Activated T-helper 1 cell treated with anti-CD3 and anti-CD28 coated beads, Interleukin-12 subunit alpha, Interleukin-12 subunit beta, Interleukin-2, Interleukin-4 antibody, amounts not matched to agents 30 ng/mL and 10 ng/mL and 1 ng/mL, durations not matched to agents 14 hours and 24 hours and 36 hours (primary cell): ENCODE measurements at regions of chr3 and their contacts with region 1.

Region 1: GRCh38 chr3:194134757-194135528 is 1.0 kb upstream of the HES1 start:
- DNase-seq: peak; percentile 80
- H3K4me3 Mint-ChIP-seq: peak overlapping the region; percentile 84
- H3K27ac Mint-ChIP-seq: peak overlapping the region; percentile 90
- H3K4me1 Mint-ChIP-seq: peaks cover 82% of the 10 kb centered on the region
- H3K27me3 Mint-ChIP-seq: peaks cover 67% of the 10 kb centered on the region

Region 2: DNA sequence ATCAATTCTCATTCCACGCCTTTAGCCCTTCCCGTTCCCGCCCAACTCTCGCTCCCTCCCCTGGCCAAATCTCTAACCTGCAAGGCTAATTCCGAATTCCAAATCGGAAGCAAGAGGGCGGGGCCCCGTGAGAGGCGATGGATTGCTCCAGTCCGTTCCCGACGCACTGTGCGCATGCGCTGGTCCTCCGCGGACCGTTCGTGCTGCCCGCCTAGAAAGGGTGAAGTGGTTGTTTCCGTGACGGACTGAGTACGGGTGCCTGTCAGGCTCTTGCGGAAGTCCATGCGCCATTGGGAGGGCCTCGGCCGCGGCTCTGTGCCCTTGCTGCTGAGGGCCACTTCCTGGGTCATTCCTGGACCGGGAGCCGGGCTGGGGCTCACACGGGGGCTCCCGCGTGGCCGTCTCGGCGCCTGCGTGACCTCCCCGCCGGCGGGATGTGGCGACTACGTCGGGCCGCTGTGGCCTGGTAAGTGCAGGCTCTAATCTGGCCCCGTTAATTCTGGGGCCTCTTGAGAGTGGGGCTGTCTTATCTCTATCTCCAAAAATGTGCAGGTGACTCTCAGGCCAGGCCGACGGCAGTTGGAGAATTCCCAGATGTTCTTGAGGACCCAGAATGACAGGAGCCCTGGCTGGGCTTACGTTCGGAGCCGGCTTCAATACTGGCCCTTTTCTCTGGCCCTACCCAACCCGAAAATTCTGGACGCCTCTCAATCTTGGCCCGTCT is 541.8 kb before region 1 on chr3 and contains the start of gene OPA1:
- intact Hi-C with region 1: loop called (anchors 5 kb)
- DNase-seq: peak; percentile 90
- H3K4me3 Mint-ChIP-seq: peak within 1 kb of the TSS; percentile 98
- H3K27ac Mint-ChIP-seq: peak within 1 kb of the TSS; percentile 99
- H3K4me1 Mint-ChIP-seq: peaks cover 49% of the 10 kb centered on the region
- H3K27me3 Mint-ChIP-seq: no peaks in the 10 kb centered on the region
- total RNA-seq, gene OPA1: 78.1 and 91.2 TPM in 2 replicates

Region 3: DNA sequence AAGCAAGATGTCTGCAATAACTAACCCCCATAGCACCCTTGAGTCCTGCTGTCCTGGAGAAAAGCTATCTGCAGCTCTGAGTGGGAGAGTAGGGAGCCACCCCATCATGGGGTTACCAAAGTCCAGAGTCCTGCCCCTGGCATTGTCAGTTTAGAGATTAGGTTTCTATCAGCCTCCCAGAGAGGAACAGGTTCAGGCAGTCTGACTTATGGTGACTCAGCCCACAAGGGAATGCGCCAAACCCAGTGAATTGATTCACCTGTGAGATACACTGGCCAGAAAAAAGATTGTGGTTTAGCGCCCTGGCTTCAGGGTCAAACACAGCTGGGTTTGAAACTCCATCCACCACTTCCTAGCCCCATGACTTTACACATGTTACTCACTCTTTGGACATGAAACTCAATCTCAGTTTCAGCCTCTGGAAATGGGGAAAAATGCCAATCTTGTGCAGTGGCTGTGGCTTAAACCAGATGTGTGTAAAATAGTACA is 262.6 kb before region 1 on chr3:
- intact Hi-C with region 1: loop called (anchors 5 kb)
- DNase-seq: no peak
- H3K4me3 Mint-ChIP-seq: no peak overlapping the region
- H3K27ac Mint-ChIP-seq: no peak overlapping the region
- H3K4me1 Mint-ChIP-seq: peaks cover 11% of the 10 kb centered on the region
- H3K27me3 Mint-ChIP-seq: peaks cover 39% of the 10 kb centered on the region

Region 4: DNA sequence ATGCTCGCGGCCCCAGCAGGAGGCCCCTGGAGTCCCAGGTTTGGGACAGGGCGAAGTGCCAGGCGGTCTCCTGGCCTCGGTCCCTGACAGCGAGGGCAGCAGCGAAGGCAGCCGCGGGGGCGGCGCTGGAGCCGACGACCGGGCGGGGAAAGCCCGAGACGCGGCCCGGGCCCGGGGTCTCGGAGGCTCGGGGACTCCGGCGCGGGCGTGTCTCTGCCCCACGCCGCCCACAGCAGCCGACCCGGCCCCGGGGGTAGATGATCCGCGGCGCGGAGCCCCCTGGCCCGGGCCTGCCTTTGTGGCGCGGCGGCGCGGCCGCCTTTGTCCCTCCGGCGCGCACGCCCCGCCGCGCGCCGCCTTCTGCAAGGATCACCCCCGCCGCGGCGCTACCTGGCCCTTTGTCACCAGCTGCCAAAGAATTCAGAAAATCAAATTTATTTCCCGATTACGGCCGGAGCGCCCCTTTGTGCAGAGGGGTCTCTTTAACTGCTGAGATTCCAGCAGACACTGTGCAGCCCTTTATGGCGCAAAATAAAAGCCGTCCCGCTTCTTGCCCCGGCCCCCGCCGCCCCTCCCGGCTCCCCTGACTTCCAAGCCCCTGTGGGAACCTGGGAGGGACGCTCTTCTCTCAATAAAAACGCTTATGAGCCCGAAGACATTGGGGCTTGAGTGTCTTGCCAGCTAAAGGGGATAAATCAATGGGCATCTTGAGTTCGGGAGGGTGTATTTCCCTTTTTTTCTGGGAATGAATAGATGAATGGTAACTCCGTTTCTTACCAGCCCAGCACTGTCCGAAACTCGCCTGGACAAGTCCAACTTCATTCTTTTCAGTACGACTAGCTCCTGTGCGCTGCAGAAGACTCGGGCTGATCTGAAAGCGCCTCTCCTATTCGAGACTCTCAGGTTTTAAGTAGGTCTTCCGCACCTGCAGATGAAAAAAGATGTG is 69.4 kb after region 1 on chr3:
- intact Hi-C with region 1: loop called (anchors 2 kb)
- DNase-seq: peak; percentile 5
- H3K4me3 Mint-ChIP-seq: peak overlapping the region; percentile 81
- H3K27ac Mint-ChIP-seq: peak overlapping the region; percentile 69
- H3K4me1 Mint-ChIP-seq: peaks cover 34% of the 10 kb centered on the region
- H3K27me3 Mint-ChIP-seq: peaks cover 8% of the 10 kb centered on the region

Region 5: GRCh38 chr3:194315088-194315964 is 180.4 kb after region 1 on chr3:
- intact Hi-C with region 1: loop called (anchors 1 kb)
- DNase-seq: peak; percentile 79
- H3K4me3 Mint-ChIP-seq: peak overlapping the region; percentile 83
- H3K27ac Mint-ChIP-seq: no peak overlapping the region
- H3K4me1 Mint-ChIP-seq: peaks cover 43% of the 10 kb centered on the region
- H3K27me3 Mint-ChIP-seq: peaks cover 7% of the 10 kb centered on the region

Region 6: GRCh38 chr3:194328053-194328657 is 193.2 kb after region 1 on chr3:
- intact Hi-C with region 1: no loop called
- DNase-seq: no peak
- H3K4me3 Mint-ChIP-seq: no peak overlapping the region
- H3K27ac Mint-ChIP-seq: no peak overlapping the region
- H3K4me1 Mint-ChIP-seq: peaks cover 5% of the 10 kb centered on the region
- H3K27me3 Mint-ChIP-seq: peaks cover 14% of the 10 kb centered on the region

Region 7: GRCh38 chr3:194583604-194584318 is 448.8 kb after region 1 on chr3:
- intact Hi-C with region 1: loop called (anchors 5 kb)
- DNase-seq: peak; percentile 95
- H3K4me3 Mint-ChIP-seq: peak overlapping the region; percentile 98
- H3K27ac Mint-ChIP-seq: peak overlapping the region; percentile 96
- H3K4me1 Mint-ChIP-seq: peaks cover 34% of the 10 kb centered on the region
- H3K27me3 Mint-ChIP-seq: peaks cover 7% of the 10 kb centered on the region